ENCODE measurements at regions of chr15 and their contacts with region 1.

Region 1: DNA sequence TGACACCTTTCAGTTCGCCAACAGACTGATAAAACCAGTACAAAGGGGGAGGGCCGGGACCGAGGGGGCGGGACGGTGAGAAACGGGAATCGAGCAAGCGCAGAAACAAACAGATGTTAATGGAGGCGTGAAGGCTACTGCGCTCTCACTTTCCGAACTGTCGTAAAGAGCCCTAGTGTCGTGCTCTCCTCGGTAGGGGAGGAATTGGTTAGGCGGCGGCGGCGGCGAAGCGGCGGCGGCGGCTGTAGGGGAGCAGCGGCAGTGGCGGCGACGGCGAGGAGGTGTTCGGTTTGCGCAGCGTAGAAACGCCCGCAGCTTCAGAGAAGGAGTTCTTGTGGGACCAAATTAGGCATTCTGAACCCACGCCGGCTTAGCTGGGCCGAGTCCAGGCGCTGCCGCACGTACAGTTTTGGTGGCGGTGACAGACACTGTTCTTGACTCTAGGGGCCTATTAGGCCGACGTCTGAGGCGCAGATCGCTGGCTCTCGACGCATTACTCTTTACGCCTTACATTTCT is at the start of gene RNF111:
- DNase-seq: peak; percentile 95
- H3K4me3 ChIP-seq: peak within 1 kb of the TSS; percentile 90 to 94
- H3K27ac ChIP-seq: peak within 1 kb of the TSS; percentile 83 to 95
- H3K4me1 ChIP-seq: peaks cover 3% of the 10 kb centered on the region
- H3K27me3 ChIP-seq: no peaks in the 10 kb centered on the region
- CTCF ChIP-seq: no peak
- POLR2A ChIP-seq: no peak
- total RNA-seq, gene RNF111: 26.8 to 32.8 TPM

Region 2: GRCh38 chr15:58924327-58924726 is 63.2 kb before region 1 on chr15:
- intact Hi-C with region 1: no loop called
- DNase-seq: no peak
- H3K4me3 ChIP-seq: no peak overlapping the region
- H3K27ac ChIP-seq: peak overlapping the region in 1 of 2 donors; percentile 23
- H3K4me1 ChIP-seq: peaks cover 10% of the 10 kb centered on the region
- H3K27me3 ChIP-seq: no peaks in the 10 kb centered on the region
- CTCF ChIP-seq: no peak
- POLR2A ChIP-seq: no peak

Region 3: DNA sequence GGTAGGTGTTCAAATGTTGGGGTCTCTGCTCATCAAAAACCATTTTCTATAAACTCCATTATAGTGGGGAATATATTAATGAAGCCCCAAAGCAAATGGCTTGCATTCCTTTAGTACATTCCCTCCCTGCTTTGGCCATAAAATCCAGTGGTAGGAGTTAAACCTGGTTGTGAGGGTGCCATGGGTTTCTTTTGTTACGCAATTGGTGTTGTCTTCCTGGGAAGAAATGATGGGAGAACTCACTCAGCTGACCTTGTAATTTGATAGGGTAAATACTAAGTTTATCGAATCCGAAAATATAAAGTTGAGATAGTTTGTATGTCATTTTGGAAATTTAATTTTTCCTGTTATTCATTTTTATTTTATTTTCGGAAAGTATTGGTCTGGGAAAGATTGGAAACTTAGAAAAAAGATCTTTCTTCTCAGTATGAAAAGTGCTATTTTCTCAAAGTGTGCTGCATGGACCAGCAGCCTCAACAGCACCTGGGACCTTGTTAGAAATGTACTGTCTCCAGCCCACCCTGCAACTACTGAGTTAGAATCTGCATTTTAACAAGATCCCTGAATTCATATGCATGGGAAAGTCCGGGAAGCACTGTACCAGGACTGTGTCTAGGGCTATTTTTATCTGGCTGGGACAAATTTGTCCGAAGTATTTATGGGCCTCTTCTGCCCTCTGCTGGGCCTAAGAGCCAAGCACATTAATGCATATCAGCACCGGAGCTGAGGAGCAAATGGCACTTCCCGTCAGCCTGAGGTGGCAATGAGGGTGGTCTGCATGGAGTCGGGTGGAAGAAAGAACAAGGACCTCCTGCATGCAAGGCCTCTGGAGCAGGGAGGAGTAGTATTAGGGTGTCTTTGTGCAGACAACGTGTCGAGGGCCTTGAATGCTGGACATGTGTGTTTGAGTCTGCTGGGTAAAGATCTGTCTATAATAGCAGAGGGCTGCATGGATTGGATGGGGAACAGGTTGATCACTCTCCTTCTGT is 505.1 kb after region 1 on chr15:
- intact Hi-C with region 1: loop called (anchors 10 kb)
- DNase-seq: peak; percentile 71
- H3K4me3 ChIP-seq: no peak overlapping the region
- H3K27ac ChIP-seq: no peak overlapping the region
- H3K4me1 ChIP-seq: no peaks in the 10 kb centered on the region
- H3K27me3 ChIP-seq: no peaks in the 10 kb centered on the region
- CTCF ChIP-seq: peak; percentile 60 to 80 (median 73)
- POLR2A ChIP-seq: no peak